ENCODE measurements at regions of chr13 and their contacts with region 1.

Region 1: GRCh38 chr13:25249001-25249543 is 38.2 kb downstream of the MTMR6 start:
- DNase-seq: peak in 5 of 10 donors; percentile 39 to 92 (median 55)

Region 2: GRCh38 chr13:24987393-24987792 is 261.7 kb before region 1 on chr13:
- intact Hi-C with region 1: no loop called
- DNase-seq: no peak

Region 3: DNA sequence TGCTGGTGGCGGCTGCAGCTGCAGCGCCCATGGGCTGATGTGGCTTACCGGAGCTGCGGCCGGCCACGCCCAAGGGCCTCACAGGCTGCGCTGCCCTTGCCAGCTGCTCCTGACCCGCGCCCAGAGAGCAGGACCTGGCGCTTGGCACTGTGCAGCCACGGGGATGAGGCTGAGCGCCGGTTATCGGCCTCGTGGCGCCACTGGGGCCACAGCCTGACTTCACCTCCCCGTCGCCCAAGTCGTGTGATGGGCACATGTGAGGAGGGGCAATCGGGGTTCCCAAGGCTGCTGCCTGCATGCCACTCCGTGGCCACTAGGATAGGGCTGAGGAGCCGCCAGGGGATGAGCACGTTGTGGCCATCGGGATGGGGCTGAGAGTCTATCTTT is 230.3 kb before region 1 on chr13:
- intact Hi-C with region 1: loop called (anchors 10 kb)
- DNase-seq: peak in 1 of 10 donors; percentile 81

Region 4: GRCh38 chr13:25085125-25085742 is 163.8 kb before region 1 on chr13:
- intact Hi-C with region 1: loop called (anchors 2 kb)
- DNase-seq: peak in 6 of 10 donors; percentile 34 to 86 (median 48)

Region 5: DNA sequence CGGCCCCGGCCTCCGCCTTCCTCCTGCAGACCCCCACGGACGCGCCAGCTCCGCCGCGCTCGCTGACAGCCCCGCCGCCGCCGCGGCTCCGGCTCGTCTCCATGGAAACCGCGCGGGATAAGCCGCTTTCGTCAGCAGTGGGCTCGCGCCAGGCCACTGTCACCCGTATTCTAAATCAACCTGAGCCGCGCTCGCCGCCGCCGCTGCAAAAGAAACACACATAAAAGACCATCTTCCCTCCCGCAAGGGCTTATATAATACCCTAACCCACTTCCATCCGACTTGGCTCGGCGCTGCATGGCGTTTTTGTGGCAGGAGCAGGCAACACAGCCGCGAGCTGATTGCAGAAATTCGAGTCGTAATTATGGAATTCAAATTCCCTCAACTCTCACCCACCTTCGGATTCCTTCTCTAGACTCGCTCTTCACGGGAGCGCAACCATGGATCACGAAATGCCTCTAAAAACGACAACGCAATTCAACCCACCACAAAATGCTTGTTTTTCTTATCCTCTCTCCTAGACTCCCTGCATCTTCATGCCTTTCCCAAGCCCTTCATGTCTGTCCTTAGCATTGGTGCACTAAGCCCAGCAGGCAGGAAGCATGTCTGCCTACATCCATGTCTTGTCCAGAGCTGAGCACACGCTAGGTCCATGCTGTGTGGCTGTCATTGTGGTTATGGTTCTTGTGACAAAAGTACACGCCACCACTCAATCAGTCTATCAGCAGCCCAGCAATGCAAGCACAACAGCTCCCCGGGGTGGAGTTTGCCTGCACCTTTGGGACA is 77.4 kb before region 1 on chr13 and contains the start of gene AMER2:
- intact Hi-C with region 1: loop called (anchors 10 kb)
- DNase-seq: peak; percentile 81 to 98 (median 90)